CD8-positive, alpha-beta T cell (primary cell): ENCODE measurements at regions of chr13 and their contacts with region 1.

Region 1: GRCh38 chr13:41310963-41311606 is at the start of gene NAA16:
- DNase-seq: peak; percentile 87 to 98 (median 95)
- ATAC-seq: peak; percentile 88
- H3K4me3 ChIP-seq: peak within 1 kb of the TSS; percentile 72 to 97
- H3K4me3 Mint-ChIP-seq: peak within 1 kb of the TSS; percentile 98
- H3K27ac ChIP-seq: peak within 1 kb of the TSS; percentile 72 to 83
- H3K27ac Mint-ChIP-seq: peak within 1 kb of the TSS; percentile 96
- H3K4me1 ChIP-seq: peaks cover 25% of the 10 kb centered on the region
- H3K4me1 Mint-ChIP-seq: peaks cover 41% of the 10 kb centered on the region
- H3K27me3 ChIP-seq: no peaks in the 10 kb centered on the region
- H3K27me3 Mint-ChIP-seq: no peaks in the 10 kb centered on the region
- CTCF ChIP-seq: no peak
- total RNA-seq, gene NAA16: 103 to 105 TPM

Region 2: DNA sequence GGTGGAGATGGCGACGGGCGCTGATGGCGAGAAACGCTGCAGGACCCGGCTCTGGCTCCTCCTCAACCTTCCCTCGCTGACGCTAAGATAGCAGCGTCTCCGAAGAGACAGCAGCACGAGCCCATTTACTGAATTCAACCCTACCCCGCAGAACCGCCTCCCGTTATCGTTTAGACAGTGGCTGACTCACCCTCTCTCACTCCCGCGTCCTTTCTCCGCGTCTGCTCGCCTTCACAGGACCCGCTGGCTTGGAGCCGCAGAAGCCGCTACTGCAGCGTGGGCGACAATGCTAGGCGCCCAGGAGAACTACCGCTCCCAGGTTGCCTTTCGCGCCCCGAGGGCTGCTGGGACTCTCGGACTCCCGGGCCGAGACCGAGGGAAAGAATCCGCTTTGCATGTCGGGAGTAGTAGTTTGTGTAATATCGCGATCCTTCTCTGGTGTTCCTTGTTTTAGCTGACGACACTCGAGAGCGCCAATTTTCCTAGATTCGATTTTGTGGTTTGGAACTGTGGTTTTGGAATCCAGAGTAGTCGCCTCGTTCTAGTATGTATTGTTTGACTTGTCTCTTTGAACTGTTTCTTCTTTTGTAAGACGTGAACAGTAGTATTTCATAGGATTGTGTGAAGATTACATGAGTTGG is 178.5 kb before region 1 on chr13 and contains the start of gene KBTBD6:
- CTCF ChIA-PET with region 1: no interaction called
- POLR2A ChIA-PET with region 1: no interaction called
- intact Hi-C with region 1: loop called (anchors 2 to 5 kb)
- DNase-seq: peak; percentile 80 to 96 (median 90)
- ATAC-seq: peak; percentile 95
- H3K4me3 ChIP-seq: peak within 1 kb of the TSS; percentile 70 to 80
- H3K4me3 Mint-ChIP-seq: peak within 1 kb of the TSS; percentile 95
- H3K27ac ChIP-seq: peak within 1 kb of the TSS; percentile 48 to 64
- H3K27ac Mint-ChIP-seq: peak within 1 kb of the TSS; percentile 93
- H3K4me1 ChIP-seq: peaks cover 43% of the 10 kb centered on the region
- H3K4me1 Mint-ChIP-seq: peaks cover 55% of the 10 kb centered on the region
- H3K27me3 ChIP-seq: no peaks in the 10 kb centered on the region
- H3K27me3 Mint-ChIP-seq: no peaks in the 10 kb centered on the region
- CTCF ChIP-seq: no peak
- total RNA-seq, gene KBTBD6: 2.2 to 2.3 TPM

Region 3: DNA sequence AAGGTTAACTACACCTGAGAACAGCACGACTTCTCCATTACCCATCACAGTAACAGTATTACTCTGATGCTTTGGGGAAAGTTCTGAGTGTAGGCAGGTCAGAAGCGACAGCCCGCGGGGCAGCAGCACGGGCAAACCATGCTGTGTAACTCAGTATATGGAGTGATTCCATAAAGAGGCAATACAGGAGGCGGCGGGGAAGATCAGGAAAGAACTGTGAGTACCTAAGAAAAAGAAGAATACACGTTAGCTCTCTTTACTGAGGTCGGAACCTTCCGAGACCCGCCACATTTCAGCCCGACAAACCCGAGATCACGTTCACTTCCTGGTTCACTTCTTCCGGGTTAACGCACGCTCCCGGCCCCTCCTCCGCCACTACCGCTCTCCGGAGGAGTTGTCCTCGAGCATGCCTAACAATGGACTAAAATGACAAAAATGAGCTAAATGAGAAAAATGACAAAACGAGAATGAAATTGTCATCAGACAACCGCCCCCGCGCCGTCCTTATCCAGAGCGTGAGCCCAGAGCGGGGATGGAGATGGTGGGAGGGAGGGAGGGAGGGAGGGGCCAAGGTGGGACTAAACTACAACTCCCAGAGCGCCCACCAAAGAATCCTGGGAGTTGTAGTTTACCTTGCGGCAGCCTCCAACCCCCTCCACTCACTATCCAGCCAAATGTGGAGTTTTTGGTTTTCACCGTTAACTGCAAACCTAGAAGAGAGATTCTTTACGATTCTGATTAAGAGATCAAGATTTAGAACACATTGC is 47.6 kb before region 1 on chr13 and contains the start of gene MTRF1:
- CTCF ChIA-PET with region 1: interaction called, 3 read pairs
- POLR2A ChIA-PET with region 1: interaction called, 3 read pairs
- intact Hi-C with region 1: loop called (anchors 1 kb)
- DNase-seq: peak; percentile 65 to 91 (median 82)
- ATAC-seq: peak; percentile 90
- H3K4me3 ChIP-seq: peak within 1 kb of the TSS; percentile 68 to 72
- H3K4me3 Mint-ChIP-seq: peak within 1 kb of the TSS; percentile 99
- H3K27ac ChIP-seq: peak within 1 kb of the TSS; percentile 73 to 84
- H3K27ac Mint-ChIP-seq: peak within 1 kb of the TSS; percentile 99
- H3K4me1 ChIP-seq: peaks cover 26% of the 10 kb centered on the region
- H3K4me1 Mint-ChIP-seq: peaks cover 40% of the 10 kb centered on the region
- H3K27me3 ChIP-seq: no peaks in the 10 kb centered on the region
- H3K27me3 Mint-ChIP-seq: no peaks in the 10 kb centered on the region
- CTCF ChIP-seq: no peak
- total RNA-seq, gene MTRF1: 26.2 to 26.9 TPM

Region 4: DNA sequence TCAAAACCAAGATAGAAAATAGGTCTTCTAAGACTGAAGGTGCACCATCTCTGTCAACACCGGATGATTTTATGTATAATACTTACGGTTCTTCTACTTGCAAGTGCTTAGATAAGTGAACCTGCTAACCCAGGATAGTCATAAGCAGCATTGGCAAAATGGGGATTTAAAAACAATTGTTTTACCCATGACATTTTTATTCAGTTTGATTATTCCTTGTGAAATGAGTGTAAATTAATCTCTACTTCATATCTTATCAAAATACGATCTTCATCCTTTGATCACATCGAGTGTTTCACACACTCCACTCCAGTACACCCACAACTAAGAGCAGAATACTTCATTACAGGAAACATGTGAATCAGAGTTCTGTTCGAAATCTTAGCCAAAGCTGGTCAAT is 24.7 kb before region 1 on chr13:
- CTCF ChIA-PET with region 1: no interaction called
- POLR2A ChIA-PET with region 1: no interaction called
- intact Hi-C with region 1: loop called (anchors 2 kb)
- DNase-seq: peak in 2 of 9 experiments; percentile 30 to 59
- ATAC-seq: peak; percentile 91
- H3K4me3 ChIP-seq: peak overlapping the region in 1 of 2 experiments; percentile 23
- H3K4me3 Mint-ChIP-seq: peak overlapping the region; percentile 30
- H3K27ac ChIP-seq: peak overlapping the region; percentile 13 to 29
- H3K27ac Mint-ChIP-seq: peak overlapping the region; percentile 88
- H3K4me1 ChIP-seq: peaks cover 32% of the 10 kb centered on the region
- H3K4me1 Mint-ChIP-seq: peaks cover 46% of the 10 kb centered on the region
- H3K27me3 ChIP-seq: no peaks in the 10 kb centered on the region
- H3K27me3 Mint-ChIP-seq: no peaks in the 10 kb centered on the region
- CTCF ChIP-seq: no peak

Region 5: GRCh38 chr13:41345914-41346589 is 35.0 kb after region 1 on chr13:
- CTCF ChIA-PET with region 1: no interaction called
- POLR2A ChIA-PET with region 1: no interaction called
- intact Hi-C with region 1: loop called in 1 of 2 experiments (anchors 5 kb)
- DNase-seq: no peak
- ATAC-seq: no peak
- H3K4me3 ChIP-seq: no peak overlapping the region
- H3K4me3 Mint-ChIP-seq: no peak overlapping the region
- H3K27ac ChIP-seq: peak overlapping the region in 1 of 2 experiments; percentile 45
- H3K27ac Mint-ChIP-seq: peak overlapping the region; percentile 90
- H3K4me1 ChIP-seq: peaks cover 26% of the 10 kb centered on the region
- H3K4me1 Mint-ChIP-seq: peaks cover 60% of the 10 kb centered on the region
- H3K27me3 ChIP-seq: no peaks in the 10 kb centered on the region
- H3K27me3 Mint-ChIP-seq: no peaks in the 10 kb centered on the region
- CTCF ChIP-seq: no peak

Region 6: DNA sequence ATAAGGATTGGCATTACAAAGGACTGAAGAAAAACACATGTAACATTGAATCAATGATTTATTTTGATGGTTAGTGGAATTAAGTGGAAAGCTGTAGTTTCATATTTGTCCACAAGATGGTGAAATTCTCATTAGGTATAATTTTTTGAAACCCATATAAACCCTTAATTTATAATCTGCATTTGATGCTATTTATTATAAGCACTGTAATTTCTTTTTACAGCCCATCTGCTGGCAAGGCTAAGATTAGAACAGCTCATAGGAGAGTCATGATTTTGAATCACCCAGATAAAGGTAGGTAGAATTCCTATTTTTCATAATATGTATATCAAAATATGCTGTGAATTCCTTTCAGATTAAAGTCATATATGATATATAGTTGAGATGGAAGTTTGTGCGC is 1774.5 kb after region 1 on chr13:
- CTCF ChIA-PET with region 1: no interaction called
- POLR2A ChIA-PET with region 1: no interaction called
- intact Hi-C with region 1: no loop called
- DNase-seq: peak in 2 of 9 experiments; percentile 29 to 48
- ATAC-seq: no peak
- H3K4me3 ChIP-seq: no peak overlapping the region
- H3K4me3 Mint-ChIP-seq: no peak overlapping the region
- H3K27ac ChIP-seq: no peak overlapping the region
- H3K27ac Mint-ChIP-seq: no peak overlapping the region
- H3K4me1 ChIP-seq: no peaks in the 10 kb centered on the region
- H3K4me1 Mint-ChIP-seq: peaks cover 14% of the 10 kb centered on the region
- H3K27me3 ChIP-seq: no peaks in the 10 kb centered on the region
- H3K27me3 Mint-ChIP-seq: no peaks in the 10 kb centered on the region
- CTCF ChIP-seq: peak; percentile 83